Cardiac septum (tissue), 1 donor: ENCODE measurements at regions of chr19 and their contacts with region 1.

Region 1: DNA sequence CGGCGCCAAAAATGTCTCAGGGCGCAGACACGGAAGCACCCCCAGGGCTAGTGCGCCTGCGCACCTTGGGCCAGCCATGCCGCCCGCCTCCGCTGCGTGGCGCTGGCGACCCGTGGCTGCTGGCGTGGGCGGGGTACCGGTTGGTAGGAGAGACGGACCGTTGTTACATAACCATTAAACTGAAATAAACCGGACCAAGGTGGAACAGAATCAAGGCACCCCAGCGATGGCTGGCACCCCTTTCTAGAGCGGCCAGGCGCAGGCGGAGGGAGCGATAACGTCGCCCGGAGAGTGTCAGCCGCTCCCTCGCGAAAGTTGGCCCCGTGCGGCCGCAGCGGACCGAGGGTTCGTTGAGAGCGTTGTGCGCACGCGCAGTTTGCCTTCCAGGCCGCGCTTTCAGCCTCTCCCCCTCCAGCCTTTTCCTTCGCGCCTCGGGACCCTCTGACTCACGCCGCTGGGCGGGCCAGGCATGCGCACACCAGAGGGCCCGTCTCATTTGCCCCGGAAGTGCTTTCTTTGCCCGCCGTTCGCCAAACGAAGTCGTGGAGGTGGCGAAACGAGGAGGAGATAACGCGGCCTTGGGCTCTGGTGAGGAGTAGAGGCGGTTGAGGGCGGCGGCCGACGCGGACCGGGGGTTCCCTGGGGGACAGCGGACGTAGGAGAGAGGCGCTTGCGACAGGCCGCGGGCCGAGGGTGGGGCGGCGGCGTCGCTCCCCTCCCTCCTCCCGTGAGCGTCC is at the starts of genes PLEKHJ1 and SF3A2:
- DNase-seq: peak; percentile 98
- total RNA-seq, gene PLEKHJ1: 51.2 TPM
- total RNA-seq, gene SF3A2: 34.1 TPM

Region 2: GRCh38 chr19:2161688-2162053 is 74.8 kb before region 1 on chr19:
- intact Hi-C with region 1: loop called (anchors 2 kb)
- DNase-seq: no peak

Region 3: GRCh38 chr19:2315818-2316353 is 79.4 kb after region 1 on chr19:
- intact Hi-C with region 1: loop called (anchors 5 kb)
- DNase-seq: peak; percentile 93